CD4-positive, alpha-beta memory T cell (primary cell): ENCODE measurements at regions of chr2 and their contacts with region 1.

Region 1: DNA sequence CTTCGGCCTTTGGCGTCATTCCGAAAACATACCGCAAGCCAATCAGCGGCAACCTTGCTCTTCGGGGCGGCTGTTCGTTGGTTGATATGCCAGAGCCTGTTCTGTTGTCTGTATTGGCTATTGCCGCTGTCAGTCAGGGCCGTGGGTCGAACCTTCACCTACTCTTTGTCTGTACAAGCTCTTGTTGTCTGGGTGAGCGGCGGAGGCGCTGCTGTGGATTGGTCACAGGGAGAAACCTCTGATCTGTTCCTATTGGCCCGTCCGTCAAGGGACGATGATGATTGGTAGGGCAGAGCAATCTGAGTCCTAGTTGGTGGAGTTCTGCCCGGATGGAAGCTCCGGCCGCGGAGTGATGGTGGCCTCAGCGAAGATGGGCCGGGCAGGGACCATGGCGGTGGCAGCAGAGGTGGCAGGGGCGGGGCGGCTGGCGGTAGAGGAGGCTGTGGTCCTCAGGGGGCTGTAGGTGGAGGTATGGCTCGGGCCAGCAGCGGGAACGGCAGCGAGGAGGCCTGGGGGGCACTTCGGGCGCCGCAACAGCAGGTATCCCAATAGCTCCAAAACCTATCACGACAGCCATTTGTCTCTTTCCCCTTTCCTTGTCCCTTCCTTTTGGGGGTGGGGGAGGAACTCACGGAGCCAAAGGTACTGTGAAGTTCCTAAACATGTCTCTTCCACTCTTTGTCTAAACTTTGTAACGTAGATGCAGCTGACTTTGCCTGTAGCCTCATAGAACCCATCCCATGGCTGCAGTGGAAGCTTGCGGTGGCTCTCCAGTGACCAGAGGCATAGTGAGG is at the start of gene WBP1:
- DNase-seq: peak; percentile 99 to 100 (median 100)
- H3K4me3 ChIP-seq: peak within 1 kb of the TSS; percentile 70 to 93
- H3K4me3 Mint-ChIP-seq: peak within 1 kb of the TSS; percentile 95 to 99 (median 98)
- H3K27ac ChIP-seq: peak within 1 kb of the TSS; percentile 100
- H3K27ac Mint-ChIP-seq: peak within 1 kb of the TSS; percentile 92 to 100 (median 99)
- H3K4me1 ChIP-seq: peaks cover 45% of the 10 kb centered on the region
- H3K4me1 Mint-ChIP-seq: peaks cover 40 to 68% (median 55%) of the 10 kb centered on the region in 4 donors
- H3K27me3 ChIP-seq: no peaks in the 10 kb centered on the region
- H3K27me3 Mint-ChIP-seq: no peaks in the 10 kb centered on the region
- total RNA-seq, gene WBP1: 108 to 109 TPM

Region 2: GRCh38 chr2:73736855-73737779 is 721.2 kb before region 1 on chr2 and contains the start of gene TPRKB:
- CTCF ChIA-PET with region 1: no interaction called
- POLR2A ChIA-PET with region 1: interaction called, 15 read pairs
- intact Hi-C with region 1: no loop called
- DNase-seq: peak; percentile 93 to 95 (median 94)
- H3K4me3 ChIP-seq: peak within 1 kb of the TSS; percentile 43 to 74
- H3K4me3 Mint-ChIP-seq: peak within 1 kb of the TSS; percentile 90 to 98 (median 95)
- H3K27ac ChIP-seq: peak within 1 kb of the TSS; percentile 68
- H3K27ac Mint-ChIP-seq: peak within 1 kb of the TSS; percentile 85 to 96 (median 93)
- H3K4me1 ChIP-seq: peaks cover 24% of the 10 kb centered on the region
- H3K4me1 Mint-ChIP-seq: peaks cover 15 to 25% (median 19%) of the 10 kb centered on the region in 4 donors
- H3K27me3 ChIP-seq: no peaks in the 10 kb centered on the region
- H3K27me3 Mint-ChIP-seq: no peaks in the 10 kb centered on the region
- total RNA-seq, gene TPRKB: 31.7 to 33.0 TPM

Region 3: DNA sequence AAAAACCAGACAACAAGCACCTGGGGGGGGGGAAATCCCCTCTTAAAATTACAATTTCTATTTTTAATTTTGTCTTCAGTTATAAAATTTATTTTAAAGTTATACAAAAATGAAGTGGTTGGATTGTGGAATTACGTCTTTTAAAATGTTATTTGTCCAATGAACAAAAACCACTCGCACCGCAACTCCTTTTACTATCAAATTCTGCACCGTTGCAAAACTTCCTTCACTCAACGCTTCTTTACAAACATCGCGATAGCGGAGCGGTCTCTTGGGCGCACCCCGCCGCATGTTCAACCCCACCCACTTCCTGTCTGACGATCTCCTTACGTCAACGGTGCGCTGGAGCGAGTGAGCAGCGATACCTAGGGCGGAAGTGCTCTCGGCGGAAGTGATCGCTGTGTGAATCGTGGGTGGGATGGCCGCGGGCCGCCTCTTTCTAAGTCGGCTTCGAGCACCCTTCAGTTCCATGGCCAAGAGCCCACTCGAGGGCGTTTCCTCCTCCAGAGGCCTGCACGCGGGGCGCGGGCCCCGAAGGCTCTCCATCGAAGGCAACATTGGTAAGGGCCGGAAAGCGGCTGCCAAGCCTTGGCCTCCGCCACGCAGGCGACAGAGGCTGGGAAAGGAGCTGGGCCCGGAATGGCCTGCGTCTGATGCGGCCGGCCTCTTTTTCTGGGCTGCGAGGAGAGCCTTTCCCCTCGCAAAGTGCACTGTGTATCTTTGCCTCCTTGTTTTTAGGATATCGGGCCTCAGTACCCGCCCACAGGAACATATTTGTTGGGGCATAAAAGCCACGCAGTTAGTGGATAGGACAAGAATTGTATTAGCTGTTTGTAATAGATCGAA is 531.6 kb before region 1 on chr2 and contains the start of gene DGUOK:
- CTCF ChIA-PET with region 1: no interaction called
- POLR2A ChIA-PET with region 1: no interaction called
- intact Hi-C with region 1: loop called (anchors 10 kb)
- DNase-seq: peak; percentile 96 to 99 (median 98)
- H3K4me3 ChIP-seq: peak within 1 kb of the TSS; percentile 66 to 72
- H3K4me3 Mint-ChIP-seq: peak within 1 kb of the TSS; percentile 77 to 95 (median 92)
- H3K27ac ChIP-seq: peak within 1 kb of the TSS; percentile 97
- H3K27ac Mint-ChIP-seq: peak within 1 kb of the TSS; percentile 98 to 99 (median 99)
- H3K4me1 ChIP-seq: peaks cover 50% of the 10 kb centered on the region
- H3K4me1 Mint-ChIP-seq: peaks cover 38 to 55% (median 45%) of the 10 kb centered on the region in 4 donors
- H3K27me3 ChIP-seq: no peaks in the 10 kb centered on the region
- H3K27me3 Mint-ChIP-seq: no peaks in the 10 kb centered on the region
- total RNA-seq, gene DGUOK: 52.2 to 55.5 TPM

Region 4: DNA sequence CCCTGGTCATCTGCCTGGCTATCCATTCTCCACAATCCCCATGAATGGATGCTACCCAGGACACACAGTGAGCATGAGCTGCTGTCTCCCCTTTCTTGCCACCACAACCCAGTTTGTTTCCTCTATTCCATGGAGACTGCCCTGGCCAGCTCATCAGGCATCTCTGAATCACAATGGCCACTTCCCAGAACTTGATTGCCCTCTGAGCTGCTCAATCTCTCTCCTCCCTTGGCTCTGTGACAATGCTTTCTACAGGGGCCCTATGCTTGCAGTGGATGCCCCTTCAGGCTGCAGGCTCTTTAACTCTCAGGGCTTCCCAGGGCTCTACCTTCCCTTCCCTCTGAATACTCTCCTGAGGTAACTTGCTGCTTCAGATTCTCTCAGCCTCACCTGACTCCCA is 100.7 kb before region 1 on chr2:
- CTCF ChIA-PET with region 1: no interaction called
- POLR2A ChIA-PET with region 1: no interaction called
- intact Hi-C with region 1: no loop called
- DNase-seq: no peak
- H3K4me3 ChIP-seq: no peak overlapping the region
- H3K4me3 Mint-ChIP-seq: no peak overlapping the region
- H3K27ac ChIP-seq: no peak overlapping the region
- H3K27ac Mint-ChIP-seq: peak overlapping the region in 2 of 7 donors; percentile 8 to 12
- H3K4me1 ChIP-seq: no peaks in the 10 kb centered on the region
- H3K4me1 Mint-ChIP-seq: no peaks in the 10 kb centered on the region
- H3K27me3 ChIP-seq: no peaks in the 10 kb centered on the region
- H3K27me3 Mint-ChIP-seq: no peaks in the 10 kb centered on the region

Region 5: GRCh38 chr2:74391580-74392448 is 66.5 kb before region 1 on chr2:
- CTCF ChIA-PET with region 1: interaction called, 10 read pairs
- POLR2A ChIA-PET with region 1: interaction called, 14 read pairs
- intact Hi-C with region 1: loop called (anchors 1 kb)
- DNase-seq: peak; percentile 92 to 96 (median 94)
- H3K4me3 ChIP-seq: peak overlapping the region; percentile 84 to 90
- H3K4me3 Mint-ChIP-seq: peak overlapping the region in 5 of 8 donors; percentile 96 to 99 (median 97)
- H3K27ac ChIP-seq: peak overlapping the region; percentile 88
- H3K27ac Mint-ChIP-seq: peak overlapping the region in 6 of 7 donors; percentile 99 to 100 (median 100)
- H3K4me1 ChIP-seq: peaks cover 27% of the 10 kb centered on the region
- H3K4me1 Mint-ChIP-seq: peaks cover 5 to 13% (median 6%) of the 10 kb centered on the region in 4 donors
- H3K27me3 ChIP-seq: no peaks in the 10 kb centered on the region
- H3K27me3 Mint-ChIP-seq: peaks cover 0 to 5% of the 10 kb centered on the region in 2 donors

Region 6: GRCh38 chr2:74472086-74472944 is 14.0 kb after region 1 on chr2 and contains the start of gene MRPL53:
- CTCF ChIA-PET with region 1: interaction called, 14 read pairs
- POLR2A ChIA-PET with region 1: interaction called, 516 read pairs
- intact Hi-C with region 1: loop called (anchors 1 kb)
- DNase-seq: peak; percentile 95 to 96 (median 95)
- H3K4me3 ChIP-seq: peak within 1 kb of the TSS; percentile 67 to 84
- H3K4me3 Mint-ChIP-seq: peak within 1 kb of the TSS; percentile 96 to 99 (median 98)
- H3K27ac ChIP-seq: peak within 1 kb of the TSS; percentile 88
- H3K27ac Mint-ChIP-seq: peak within 1 kb of the TSS; percentile 97 to 100 (median 99)
- H3K4me1 ChIP-seq: peaks cover 20% of the 10 kb centered on the region
- H3K4me1 Mint-ChIP-seq: peaks cover 9 to 40% (median 21%) of the 10 kb centered on the region in 4 donors
- H3K27me3 ChIP-seq: no peaks in the 10 kb centered on the region
- H3K27me3 Mint-ChIP-seq: no peaks in the 10 kb centered on the region
- total RNA-seq, gene MRPL53: 72.8 to 82.3 TPM

Region 7: GRCh38 chr2:74507145-74507925 is 49.0 kb after region 1 on chr2 and contains the start of gene PCGF1:
- CTCF ChIA-PET with region 1: interaction called, 4 read pairs
- POLR2A ChIA-PET with region 1: interaction called, 37 read pairs
- intact Hi-C with region 1: loop called (anchors 1 kb)
- DNase-seq: peak; percentile 98 to 99 (median 98)
- H3K4me3 ChIP-seq: peak within 1 kb of the TSS; percentile 83 to 97
- H3K4me3 Mint-ChIP-seq: peak within 1 kb of the TSS; percentile 98 to 100 (median 100)
- H3K27ac ChIP-seq: peak within 1 kb of the TSS; percentile 98
- H3K27ac Mint-ChIP-seq: peak within 1 kb of the TSS; percentile 97 to 100 (median 100)
- H3K4me1 ChIP-seq: peaks cover 40% of the 10 kb centered on the region
- H3K4me1 Mint-ChIP-seq: peaks cover 18 to 64% (median 46%) of the 10 kb centered on the region in 4 donors
- H3K27me3 ChIP-seq: peaks cover 19% of the 10 kb centered on the region
- H3K27me3 Mint-ChIP-seq: peaks cover 16 to 45% of the 10 kb centered on the region in 2 donors
- total RNA-seq, gene PCGF1: 31.1 to 42.2 TPM

Region 8: GRCh38 chr2:74587664-74588277 is 129.4 kb after region 1 on chr2:
- CTCF ChIA-PET with region 1: interaction called, 10 read pairs
- POLR2A ChIA-PET with region 1: interaction called, 4 read pairs
- intact Hi-C with region 1: loop called (anchors 1 kb)
- DNase-seq: peak; percentile 58 to 68 (median 67)
- H3K4me3 ChIP-seq: no peak overlapping the region
- H3K4me3 Mint-ChIP-seq: no peak overlapping the region
- H3K27ac ChIP-seq: no peak overlapping the region
- H3K27ac Mint-ChIP-seq: no peak overlapping the region
- H3K4me1 ChIP-seq: peaks cover 8% of the 10 kb centered on the region
- H3K4me1 Mint-ChIP-seq: peaks cover 7 to 10% (median 9%) of the 10 kb centered on the region in 4 donors
- H3K27me3 ChIP-seq: peaks cover 13% of the 10 kb centered on the region
- H3K27me3 Mint-ChIP-seq: peaks cover 1 to 8% of the 10 kb centered on the region in 2 donors